ENCODE measurements at regions of chr19 and their contacts with region 1.

Region 1: DNA sequence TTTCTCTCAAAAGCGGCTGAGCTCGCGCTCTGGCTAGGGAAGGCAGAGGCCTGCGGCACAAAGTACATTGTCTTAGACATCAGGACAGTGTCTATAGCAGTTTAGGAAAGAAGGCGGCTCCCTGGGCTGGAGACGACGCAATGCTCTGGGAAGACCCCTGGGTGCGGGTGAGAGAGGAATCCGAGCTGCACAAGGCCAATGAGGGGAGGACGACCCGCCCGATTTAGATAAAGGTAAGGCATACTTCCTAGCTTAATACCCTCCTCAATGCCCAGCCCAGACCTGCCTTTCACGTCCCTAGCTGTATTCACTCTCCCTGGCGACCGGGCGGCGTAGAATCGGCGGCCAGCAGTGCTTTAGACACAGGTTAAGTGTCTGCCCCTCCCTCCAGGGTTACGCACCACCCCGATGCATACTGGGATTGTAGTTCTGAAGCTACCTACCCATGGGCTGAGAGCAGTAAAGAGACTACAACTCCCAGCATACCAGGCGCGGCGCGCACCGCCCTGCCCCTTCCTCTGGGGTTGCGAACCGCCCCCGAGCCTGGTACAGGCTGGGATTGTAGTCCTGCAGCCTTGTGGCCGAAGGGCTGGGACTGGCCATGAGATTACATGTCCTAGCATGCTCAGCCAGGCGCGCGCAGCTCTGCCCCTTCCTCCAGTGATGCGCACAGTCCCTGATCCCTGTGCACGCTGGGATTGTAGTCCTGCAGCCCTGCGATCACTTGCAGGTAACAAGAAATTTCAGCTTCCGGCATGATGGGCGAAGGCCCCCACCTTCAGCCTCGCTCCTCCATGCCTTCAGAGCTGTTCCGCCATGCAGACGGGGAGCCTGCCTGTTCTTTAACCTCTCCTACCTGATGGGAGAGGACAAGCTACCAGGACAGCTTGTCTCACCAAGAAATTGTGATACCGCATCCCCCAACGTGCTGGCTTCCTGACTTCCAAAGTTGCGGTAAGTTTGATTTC is 43.4 kb upstream of the ZNF14 start:
- DNase-seq: peak; percentile 99
- ATAC-seq: peak; percentile 96
- H3K4me3 Mint-ChIP-seq: peak overlapping the region; percentile 98
- H3K27ac Mint-ChIP-seq: peak overlapping the region; percentile 95
- H3K4me1 Mint-ChIP-seq: peaks cover 25% of the 10 kb centered on the region
- H3K27me3 Mint-ChIP-seq: no peaks in the 10 kb centered on the region
- CTCF ChIP-seq: no peak

Region 2: DNA sequence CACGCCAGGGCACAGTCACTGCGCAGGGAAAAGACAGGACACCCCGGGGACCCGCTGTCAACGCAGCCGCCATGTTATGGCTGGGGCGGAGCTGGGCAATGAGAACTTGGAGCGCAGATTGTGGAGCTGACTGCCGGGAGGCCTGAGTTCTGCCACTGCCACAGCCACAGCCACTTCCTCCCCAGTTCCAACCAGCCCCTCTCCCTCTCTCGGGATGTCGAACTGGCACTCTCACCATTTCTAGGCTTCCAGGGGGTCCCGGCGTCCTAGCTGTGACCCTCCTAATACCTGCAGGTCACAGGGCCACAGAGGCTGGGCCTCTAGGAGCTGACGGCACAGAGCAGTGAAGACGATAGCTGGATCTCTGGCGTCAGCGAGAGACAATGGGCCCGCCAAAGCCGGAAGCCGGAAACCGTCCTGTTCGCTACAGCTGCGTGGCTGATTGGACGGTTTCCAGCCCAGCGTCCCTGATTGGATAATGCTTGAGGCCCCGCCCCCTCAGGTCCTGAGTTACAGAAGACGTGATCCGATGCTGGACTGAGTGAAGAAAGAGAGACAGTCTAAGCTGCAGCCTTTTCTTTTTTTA is 45.1 kb after region 1 on chr19 and contains the start of gene ZNF506:
- CTCF ChIA-PET with region 1: interaction called, 5 read pairs
- POLR2A ChIA-PET with region 1: interaction called, 11 read pairs
- DNase-seq: peak; percentile 97
- ATAC-seq: peak; percentile 97
- H3K4me3 Mint-ChIP-seq: peak within 1 kb of the TSS; percentile 100
- H3K27ac Mint-ChIP-seq: peak within 1 kb of the TSS; percentile 97
- H3K4me1 Mint-ChIP-seq: no peaks in the 10 kb centered on the region
- H3K27me3 Mint-ChIP-seq: peaks cover 10% of the 10 kb centered on the region
- CTCF ChIP-seq: no peak
- total RNA-seq, gene ZNF506: 15.7 to 20.8 TPM (median 17.9 TPM) in 3 replicates